Endothelial cell of umbilical vein (primary cell): ENCODE measurements at regions of chr10 and their contacts with region 1.

Region 1: GRCh38 chr10:69786791-69787190 is 14.9 kb upstream of the COL13A1 start:
- DNase-seq: peak; percentile 66
- H3K4me3 ChIP-seq: no peak overlapping the region
- H3K27ac ChIP-seq: no peak overlapping the region
- H3K4me1 ChIP-seq: no peaks in the 10 kb centered on the region
- H3K27me3 ChIP-seq: peaks cover 24 to 25% of the 10 kb centered on the region in 2 experiments
- CTCF ChIP-seq: peak; percentile 49 to 50
- POLR2A ChIP-seq: no peak

Region 2: DNA sequence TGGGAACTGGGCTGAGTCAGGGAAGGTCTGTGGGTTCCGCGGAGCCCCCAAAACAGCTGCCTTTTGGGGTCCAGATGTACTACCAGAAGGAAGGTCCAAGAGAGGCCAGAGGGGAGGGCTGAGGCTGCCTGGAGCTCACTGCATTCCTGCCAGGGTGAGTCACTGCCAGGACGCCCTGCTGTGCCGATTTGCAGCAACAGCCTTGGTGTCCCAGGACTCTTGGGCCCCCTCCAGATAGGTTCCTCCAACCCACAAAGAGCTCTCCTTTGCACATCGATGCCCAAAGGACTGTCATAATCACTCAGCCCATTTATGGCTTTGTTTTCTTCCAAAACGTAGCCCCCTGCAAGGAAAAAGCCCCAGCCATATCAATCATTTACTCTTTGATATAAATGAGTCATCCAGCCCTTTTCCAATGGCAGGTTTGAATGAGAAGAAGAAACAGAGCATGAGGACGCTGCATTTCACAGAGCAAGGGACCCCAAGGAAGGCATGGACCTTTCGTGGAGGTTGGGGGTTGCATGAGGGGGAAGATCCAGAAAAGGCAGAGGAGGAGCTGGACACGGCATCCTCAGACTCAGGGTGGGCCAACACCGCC is 17.3 kb before region 1 on chr10:
- CTCF ChIA-PET with region 1: interaction called, 11 read pairs
- POLR2A ChIA-PET with region 1: no interaction called
- dilution Hi-C with region 1: no loop called
- intact Hi-C with region 1: no loop called
- DNase-seq: peak; percentile 60
- H3K4me3 ChIP-seq: no peak overlapping the region
- H3K27ac ChIP-seq: no peak overlapping the region
- H3K4me1 ChIP-seq: peaks cover 13% of the 10 kb centered on the region
- H3K27me3 ChIP-seq: peaks cover 0 to 3% of the 10 kb centered on the region in 2 experiments
- CTCF ChIP-seq: no peak
- POLR2A ChIP-seq: no peak

Region 3: GRCh38 chr10:69807122-69807521 is 20.3 kb after region 1 on chr10:
- CTCF ChIA-PET with region 1: interaction called, 15 read pairs
- POLR2A ChIA-PET with region 1: no interaction called
- dilution Hi-C with region 1: no loop called
- intact Hi-C with region 1: no loop called
- DNase-seq: peak; percentile 30
- H3K4me3 ChIP-seq: no peak overlapping the region
- H3K27ac ChIP-seq: peak overlapping the region; percentile 72
- H3K4me1 ChIP-seq: peaks cover 43% of the 10 kb centered on the region
- H3K27me3 ChIP-seq: no peaks in the 10 kb centered on the region
- CTCF ChIP-seq: no peak
- POLR2A ChIP-seq: no peak

Region 4: GRCh38 chr10:69936091-69936490 is 149.3 kb after region 1 on chr10:
- CTCF ChIA-PET with region 1: interaction called, 11 read pairs
- POLR2A ChIA-PET with region 1: no interaction called
- dilution Hi-C with region 1: no loop called
- intact Hi-C with region 1: no loop called
- DNase-seq: no peak
- H3K4me3 ChIP-seq: no peak overlapping the region
- H3K27ac ChIP-seq: no peak overlapping the region
- H3K4me1 ChIP-seq: no peaks in the 10 kb centered on the region
- H3K27me3 ChIP-seq: no peaks in the 10 kb centered on the region
- CTCF ChIP-seq: peak in 1 of 2 donors; percentile 14
- POLR2A ChIP-seq: no peak

Region 5: GRCh38 chr10:70115948-70116682 is 329.3 kb after region 1 on chr10:
- CTCF ChIA-PET with region 1: interaction called, 16 read pairs
- POLR2A ChIA-PET with region 1: no interaction called
- dilution Hi-C with region 1: no loop called
- intact Hi-C with region 1: no loop called
- DNase-seq: peak; percentile 35
- H3K4me3 ChIP-seq: no peak overlapping the region
- H3K27ac ChIP-seq: no peak overlapping the region
- H3K4me1 ChIP-seq: peaks cover 6% of the 10 kb centered on the region
- H3K27me3 ChIP-seq: no peaks in the 10 kb centered on the region
- CTCF ChIP-seq: peak; percentile 85 to 95
- POLR2A ChIP-seq: no peak